Vagina (tissue), 2 donors: ENCODE measurements at regions of chr19 and their contacts with region 1.

Region 1: GRCh38 chr19:13861732-13862531 is 15.0 kb upstream of the NANOS3 start:
- DNase-seq: no peak
- H3K4me3 ChIP-seq: peak overlapping the region; percentile 40 to 46
- H3K27ac ChIP-seq: peak overlapping the region; percentile 97
- H3K4me1 ChIP-seq: peaks cover 30% of the 10 kb centered on the region
- H3K27me3 ChIP-seq: no peaks in the 10 kb centered on the region
- CTCF ChIP-seq: peak; percentile 95 to 100 (median 98)
- POLR2A ChIP-seq: peak in 1 of 2 donors; percentile 42

Region 2: DNA sequence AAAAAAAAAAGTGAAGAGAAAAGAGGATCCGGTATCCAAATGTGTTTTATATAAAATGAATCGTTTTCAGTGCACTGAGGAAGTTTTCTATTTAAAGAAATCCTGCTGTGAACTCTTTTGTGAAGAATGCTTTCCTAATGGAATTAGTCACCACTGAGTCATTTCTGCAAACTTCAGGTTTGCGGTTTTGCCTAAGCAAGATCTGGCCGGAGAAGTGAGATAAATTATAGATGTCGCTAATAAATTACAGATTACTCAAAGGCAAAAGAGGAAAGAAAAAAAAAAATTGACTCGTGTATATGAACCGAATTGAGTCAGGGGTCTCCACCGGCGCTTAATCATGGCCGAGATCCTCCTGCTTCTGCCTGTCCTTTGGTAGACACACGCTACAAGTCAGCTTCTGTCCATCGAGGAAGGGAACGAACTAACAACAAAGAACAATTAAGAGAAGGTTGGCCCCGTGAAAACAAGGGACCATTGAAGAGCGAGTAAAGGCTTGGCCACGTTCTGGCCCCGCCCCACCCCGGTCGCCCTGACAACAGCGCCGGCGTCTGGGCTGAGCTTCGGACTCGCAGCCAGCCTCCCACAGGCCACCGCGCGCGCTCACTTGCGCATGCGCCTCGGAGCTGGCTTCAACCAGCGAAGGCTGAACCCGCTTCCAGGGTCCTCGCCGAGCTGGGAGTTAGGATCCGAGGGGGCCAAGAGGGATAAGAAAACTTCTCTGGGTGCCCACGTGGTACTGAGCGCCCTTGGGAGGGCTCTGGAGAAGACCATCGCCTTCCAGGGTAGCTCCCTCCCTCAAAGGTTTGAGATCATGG is 130.6 kb before region 1 on chr19:
- intact Hi-C with region 1: no loop called
- DNase-seq: peak in 1 of 2 donors; percentile 94
- H3K4me3 ChIP-seq: peak overlapping the region; percentile 51 to 59
- H3K27ac ChIP-seq: peak overlapping the region; percentile 98
- H3K4me1 ChIP-seq: peaks cover 17% of the 10 kb centered on the region
- H3K27me3 ChIP-seq: no peaks in the 10 kb centered on the region
- CTCF ChIP-seq: no peak
- POLR2A ChIP-seq: peak in 1 of 2 donors; percentile 17

Region 3: DNA sequence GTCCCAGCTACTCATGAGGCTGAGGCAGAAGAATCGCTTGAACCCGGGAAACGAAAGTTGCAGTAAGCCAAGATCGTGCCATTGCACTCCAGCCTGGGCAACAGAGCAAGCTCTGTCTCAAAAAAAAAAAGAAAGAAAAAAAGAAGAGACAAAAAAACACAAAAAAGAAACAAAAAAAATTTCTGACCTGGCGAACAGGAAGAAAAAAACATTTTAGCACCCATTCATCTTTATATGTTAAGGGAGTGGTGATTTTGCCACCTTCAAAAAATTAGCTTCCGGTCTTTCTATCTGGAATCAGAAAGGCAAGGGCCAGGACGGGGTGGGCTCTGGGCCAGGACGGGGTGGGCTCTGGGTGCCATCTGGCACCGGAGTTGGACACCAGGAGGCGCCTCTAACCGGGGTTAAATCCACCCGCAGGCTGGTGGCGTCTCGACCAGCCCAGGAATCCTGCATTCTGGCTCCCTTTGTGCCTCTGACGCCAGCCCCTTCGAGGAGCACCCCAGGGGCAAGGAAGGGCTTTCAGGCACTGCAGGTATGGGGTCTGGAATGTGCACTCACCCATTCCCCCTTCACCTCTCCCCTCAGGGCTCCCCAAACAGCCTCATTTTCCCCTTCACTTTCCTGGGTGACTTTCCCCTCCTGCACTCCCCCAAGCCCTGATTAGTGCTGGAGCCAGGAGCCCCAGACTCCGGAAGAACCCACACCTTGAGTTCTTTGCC is 77.0 kb before region 1 on chr19:
- intact Hi-C with region 1: loop called (anchors 5 kb)
- DNase-seq: no peak
- H3K4me3 ChIP-seq: no peak overlapping the region
- H3K27ac ChIP-seq: peak overlapping the region; percentile 36
- H3K4me1 ChIP-seq: peaks cover 47% of the 10 kb centered on the region
- H3K27me3 ChIP-seq: no peaks in the 10 kb centered on the region
- CTCF ChIP-seq: peak; percentile 38 to 54 (median 52)
- POLR2A ChIP-seq: no peak

Region 4: DNA sequence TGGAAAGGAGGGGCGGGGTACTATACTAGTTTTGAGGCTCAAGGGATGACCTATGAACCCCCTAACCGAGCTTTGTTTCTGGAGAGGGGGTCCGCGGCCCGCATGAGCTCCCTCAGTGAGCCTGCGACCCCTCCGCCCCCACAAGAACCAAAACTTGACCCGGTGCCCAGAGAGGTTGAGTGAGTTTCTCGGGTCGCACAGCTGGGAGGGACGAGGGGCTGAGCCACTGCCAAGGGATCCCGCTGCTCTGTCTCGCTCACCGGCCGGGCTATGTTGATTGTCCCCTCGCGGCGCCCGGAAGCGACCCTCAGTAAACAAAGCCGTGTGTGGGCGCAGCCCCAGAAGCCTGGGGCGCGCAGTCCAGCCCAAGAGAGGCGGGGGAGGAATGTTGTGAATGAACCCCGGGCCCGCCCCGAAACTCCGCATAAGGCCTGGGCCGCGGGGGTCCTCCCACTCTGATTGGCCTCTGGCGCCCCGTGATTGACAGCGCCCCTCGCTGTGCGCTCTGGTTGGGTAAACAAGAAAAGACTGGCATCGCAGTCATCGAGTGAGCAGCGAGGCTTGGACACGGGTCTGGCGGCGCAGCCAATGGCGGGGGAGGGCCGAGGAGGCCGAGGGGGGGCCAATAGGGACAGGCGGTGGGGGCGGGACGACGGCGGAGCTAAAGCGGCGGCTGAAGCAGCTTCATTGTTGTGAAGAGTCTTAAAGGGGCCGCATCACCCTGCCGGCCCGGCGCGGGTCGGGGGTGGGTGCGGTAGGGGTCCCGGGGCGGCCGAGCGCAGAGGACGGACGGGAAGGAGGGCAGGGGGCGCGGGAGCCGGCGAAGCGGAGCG is 67.0 kb before region 1 on chr19 and contains the start of gene ZSWIM4:
- intact Hi-C with region 1: loop called (anchors 5 kb)
- DNase-seq: peak; percentile 98 to 99
- H3K4me3 ChIP-seq: peak within 1 kb of the TSS; percentile 65 to 94
- H3K27ac ChIP-seq: peak within 1 kb of the TSS; percentile 94
- H3K4me1 ChIP-seq: peaks cover 35% of the 10 kb centered on the region
- H3K27me3 ChIP-seq: no peaks in the 10 kb centered on the region
- CTCF ChIP-seq: no peak
- POLR2A ChIP-seq: peak in 1 of 2 donors; percentile 52
- total RNA-seq, gene ZSWIM4: 13.0 TPM